ENCODE measurements at regions of chr13 and their contacts with region 1.

Region 1: DNA sequence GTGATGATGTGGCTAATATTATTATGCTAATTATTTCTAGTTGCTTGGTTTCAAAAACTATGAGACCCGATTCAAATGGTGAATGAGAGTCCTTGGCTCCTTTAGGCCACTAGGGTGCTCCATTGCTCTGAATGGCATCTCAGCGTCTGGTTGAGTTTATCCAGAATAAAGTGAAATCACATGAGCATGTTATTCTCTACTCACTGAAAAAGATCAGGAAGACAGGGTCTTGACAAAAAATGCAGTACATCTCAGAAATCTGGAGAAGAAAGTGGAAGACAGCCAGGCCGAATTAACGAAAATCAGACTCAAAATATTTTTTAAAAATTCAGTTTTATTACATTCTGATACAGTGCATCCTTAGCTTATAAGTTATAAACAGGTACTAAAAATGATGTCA is 516.2 kb downstream of the MYO16 start:
- DNase-seq: peak; percentile 93
- H3K4me3 ChIP-seq: no peak overlapping the region
- H3K27ac ChIP-seq: peak overlapping the region; percentile 80
- H3K4me1 ChIP-seq: peaks cover 64% of the 10 kb centered on the region
- H3K27me3 ChIP-seq: no peaks in the 10 kb centered on the region
- CTCF ChIP-seq: peak; percentile 92

Region 2: GRCh38 chr13:107992542-107992941 is 1153.1 kb before region 1 on chr13:
- CTCF ChIA-PET with region 1: no interaction called
- POLR2A ChIA-PET with region 1: no interaction called
- intact Hi-C with region 1: no loop called
- DNase-seq: no peak
- H3K4me3 ChIP-seq: no peak overlapping the region
- H3K27ac ChIP-seq: no peak overlapping the region
- H3K4me1 ChIP-seq: no peaks in the 10 kb centered on the region
- H3K27me3 ChIP-seq: no peaks in the 10 kb centered on the region
- CTCF ChIP-seq: no peak

Region 3: GRCh38 chr13:108915634-108916512 is 229.8 kb before region 1 on chr13:
- CTCF ChIA-PET with region 1: no interaction called
- POLR2A ChIA-PET with region 1: no interaction called
- intact Hi-C with region 1: loop called (anchors 5 kb)
- DNase-seq: peak; percentile 62
- H3K4me3 ChIP-seq: peak overlapping the region; percentile 4
- H3K27ac ChIP-seq: peak overlapping the region; percentile 61
- H3K4me1 ChIP-seq: peaks cover 36% of the 10 kb centered on the region
- H3K27me3 ChIP-seq: no peaks in the 10 kb centered on the region
- CTCF ChIP-seq: no peak

Region 4: DNA sequence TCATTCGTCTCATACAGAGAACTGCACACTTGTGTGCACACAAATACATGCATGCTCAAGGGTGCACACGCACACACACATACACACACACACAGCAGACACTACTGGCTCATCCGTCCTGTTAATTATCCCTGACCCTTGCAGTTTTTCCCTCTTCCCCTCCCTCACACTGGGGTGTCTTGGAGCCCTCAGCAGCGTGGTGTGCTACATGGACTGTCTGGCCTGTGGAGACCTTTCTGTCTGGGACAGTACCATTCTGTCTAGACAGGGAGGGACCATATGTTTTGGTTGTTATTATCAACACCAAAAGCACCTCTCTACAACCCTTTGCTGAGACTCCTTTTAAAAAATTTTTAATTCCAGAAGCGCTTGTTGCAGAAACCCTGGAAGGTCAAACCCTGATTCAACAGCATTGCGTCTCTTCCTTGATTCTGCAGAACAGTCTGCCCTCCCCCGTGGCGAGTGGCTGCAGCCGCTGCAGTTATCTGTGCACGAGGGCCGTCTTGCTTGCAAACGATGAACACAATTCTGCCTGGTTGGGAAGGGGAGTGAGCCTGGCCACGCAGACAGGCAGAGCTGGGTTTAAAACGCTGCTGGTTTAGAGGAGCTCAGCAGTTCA is 266.8 kb after region 1 on chr13:
- CTCF ChIA-PET with region 1: no interaction called
- POLR2A ChIA-PET with region 1: no interaction called
- intact Hi-C with region 1: loop called (anchors 5 kb)
- DNase-seq: peak; percentile 93
- H3K4me3 ChIP-seq: peak overlapping the region; percentile 15
- H3K27ac ChIP-seq: peak overlapping the region; percentile 81
- H3K4me1 ChIP-seq: peaks cover 53% of the 10 kb centered on the region
- H3K27me3 ChIP-seq: no peaks in the 10 kb centered on the region
- CTCF ChIP-seq: no peak

Region 5: DNA sequence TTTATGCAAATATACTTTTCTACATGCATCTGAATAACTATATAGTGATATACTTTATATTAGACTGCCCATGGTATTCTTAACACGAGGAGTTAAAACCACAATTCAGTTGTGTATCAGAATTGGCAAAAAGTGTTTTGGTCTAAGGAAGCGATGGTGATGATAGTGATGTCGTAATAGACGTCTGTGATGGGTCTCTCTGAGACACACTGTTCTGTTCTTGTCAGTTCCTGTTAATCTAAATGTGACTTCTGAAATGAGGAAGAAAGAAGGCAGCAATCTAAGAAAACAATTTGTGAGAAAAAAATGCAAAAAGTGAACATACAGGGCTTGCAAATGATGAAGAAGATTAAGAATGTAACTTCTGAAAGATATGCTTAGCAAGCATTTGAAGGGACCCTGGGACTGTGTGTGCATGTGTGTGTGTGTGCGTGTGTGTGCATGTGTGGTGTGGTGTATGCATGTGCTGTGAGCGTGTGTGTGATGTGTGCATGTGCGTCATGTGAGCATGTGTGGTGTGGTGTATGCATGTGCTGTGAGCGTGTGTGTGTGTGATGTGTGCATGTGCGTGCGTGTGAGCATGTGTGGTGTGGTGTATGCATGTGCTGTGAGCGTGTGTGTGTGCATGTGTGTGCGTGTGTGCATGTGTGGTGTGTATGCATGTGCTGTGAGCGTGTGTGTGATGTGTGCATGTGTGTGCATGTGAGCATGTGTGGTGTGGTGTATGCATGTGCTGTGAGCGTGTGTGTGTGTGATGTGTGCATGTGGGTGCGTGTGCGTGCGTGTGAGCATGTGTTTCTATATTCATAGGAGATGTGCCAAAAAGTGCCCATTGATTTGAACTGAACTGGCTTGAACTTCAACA is 508.9 kb after region 1 on chr13:
- CTCF ChIA-PET with region 1: no interaction called
- POLR2A ChIA-PET with region 1: no interaction called
- intact Hi-C with region 1: loop called (anchors 1 kb)
- DNase-seq: peak; percentile 63
- H3K4me3 ChIP-seq: no peak overlapping the region
- H3K27ac ChIP-seq: peak overlapping the region; percentile 94
- H3K4me1 ChIP-seq: peaks cover 67% of the 10 kb centered on the region
- H3K27me3 ChIP-seq: no peaks in the 10 kb centered on the region
- CTCF ChIP-seq: no peak

Region 6: GRCh38 chr13:109778102-109778542 is 632.5 kb after region 1 on chr13:
- CTCF ChIA-PET with region 1: no interaction called
- POLR2A ChIA-PET with region 1: no interaction called
- intact Hi-C with region 1: loop called (anchors 5 kb)
- DNase-seq: peak; percentile 60
- H3K4me3 ChIP-seq: peak overlapping the region; percentile 82
- H3K27ac ChIP-seq: peak overlapping the region; percentile 97
- H3K4me1 ChIP-seq: peaks cover 35% of the 10 kb centered on the region
- H3K27me3 ChIP-seq: no peaks in the 10 kb centered on the region
- CTCF ChIP-seq: no peak

Region 7: DNA sequence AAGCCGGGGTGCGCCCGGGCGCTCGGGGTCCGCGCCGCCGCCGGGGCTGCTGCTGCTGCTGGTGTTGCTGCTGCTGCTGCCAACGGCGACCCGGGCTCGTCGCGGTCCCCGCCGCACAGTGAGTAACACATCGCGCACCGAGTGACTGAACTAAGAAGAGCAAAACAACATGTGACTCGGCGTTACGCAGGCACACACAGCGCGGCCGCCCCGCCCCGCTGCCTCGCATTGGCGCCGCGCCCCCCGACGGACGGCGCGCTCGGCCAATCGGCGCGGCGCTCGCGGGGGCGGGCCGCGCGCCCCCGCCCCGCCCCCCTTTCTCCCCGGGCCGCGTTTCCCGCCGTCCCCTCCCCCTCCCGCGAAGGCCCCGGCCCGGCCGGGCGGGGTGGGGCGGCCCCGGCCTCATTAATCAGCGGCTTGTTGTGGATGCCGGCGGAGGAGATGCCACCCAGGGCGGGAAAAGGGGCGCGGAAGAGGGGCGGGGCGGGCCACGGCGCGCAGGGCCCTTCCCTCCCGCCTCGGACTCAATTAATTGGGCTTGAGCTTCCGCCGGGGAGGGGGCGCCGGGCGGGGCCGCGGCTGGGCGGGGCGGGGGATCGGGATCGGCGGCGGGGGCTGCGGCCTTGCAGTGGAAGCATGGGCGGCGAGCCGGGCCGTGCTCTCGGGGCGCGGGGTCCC is 641.0 kb after region 1 on chr13 and contains the start of gene IRS2:
- CTCF ChIA-PET with region 1: no interaction called
- POLR2A ChIA-PET with region 1: interaction called, 10 read pairs
- intact Hi-C with region 1: no loop called
- DNase-seq: peak; percentile 97
- H3K4me3 ChIP-seq: peak within 1 kb of the TSS; percentile 84
- H3K27ac ChIP-seq: peak within 1 kb of the TSS; percentile 94
- H3K4me1 ChIP-seq: peaks cover 32% of the 10 kb centered on the region
- H3K27me3 ChIP-seq: no peaks in the 10 kb centered on the region
- CTCF ChIP-seq: no peak
- total RNA-seq, gene IRS2: 135 TPM in 2 replicates

Region 8: GRCh38 chr13:110108347-110109174 is 962.9 kb after region 1 on chr13:
- CTCF ChIA-PET with region 1: no interaction called
- POLR2A ChIA-PET with region 1: no interaction called
- intact Hi-C with region 1: loop called (anchors 10 kb)
- DNase-seq: peak; percentile 85
- H3K4me3 ChIP-seq: no peak overlapping the region
- H3K27ac ChIP-seq: no peak overlapping the region
- H3K4me1 ChIP-seq: peaks cover 12% of the 10 kb centered on the region
- H3K27me3 ChIP-seq: no peaks in the 10 kb centered on the region
- CTCF ChIP-seq: peak; percentile 76